SK-N-SH (cell line): ENCODE measurements at regions of chr10 and their contacts with region 1.

Region 1: DNA sequence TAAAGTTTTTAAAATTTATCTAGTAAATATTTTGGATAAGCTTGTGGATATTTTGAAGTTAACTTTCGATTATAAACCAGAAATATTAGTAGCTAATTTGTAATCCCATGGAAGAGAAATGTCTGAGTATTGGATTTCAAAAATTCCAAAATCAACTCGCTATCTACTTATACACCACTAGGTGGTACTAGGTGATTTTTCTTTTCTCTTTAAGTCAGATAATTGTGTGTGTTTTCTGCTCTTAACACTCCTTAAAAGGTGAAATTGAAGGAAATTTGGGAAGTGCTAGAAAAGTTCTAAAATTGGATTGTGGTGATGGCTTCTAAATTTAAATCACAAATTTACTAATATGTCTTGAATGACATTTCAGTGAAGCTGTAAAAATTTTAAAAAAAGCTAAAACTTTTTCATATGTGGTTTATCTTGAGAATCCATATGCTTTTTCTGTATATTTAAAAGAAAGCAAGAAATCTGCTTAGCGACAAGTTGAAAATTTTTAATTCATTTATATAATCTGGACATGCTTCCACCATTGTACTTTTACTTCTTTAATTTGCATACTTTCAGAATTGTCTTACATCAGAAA is 90.2 kb downstream of the IPMK start:
- DNase-seq: peak; percentile 23
- H3K4me3 ChIP-seq: no peak overlapping the region; a peak in 1 of 4 replicates
- H3K27ac ChIP-seq: no peak overlapping the region
- H3K4me1 ChIP-seq: no peaks in the 10 kb centered on the region; a peak in 1 of 4 replicates
- H3K27me3 ChIP-seq: no peaks in the 10 kb centered on the region
- CTCF ChIP-seq: peak; percentile 79
- EP300 ChIP-seq: no peak
- RAD21 ChIP-seq: peak; percentile 84

Region 2: GRCh38 chr10:57905861-57906260 is 271.6 kb before region 1 on chr10:
- CTCF ChIA-PET with region 1: no interaction called
- POLR2A ChIA-PET with region 1: no interaction called
- DNase-seq: no peak
- H3K4me3 ChIP-seq: no peak overlapping the region
- H3K27ac ChIP-seq: no peak overlapping the region
- H3K4me1 ChIP-seq: no peaks in the 10 kb centered on the region
- H3K27me3 ChIP-seq: no peaks in the 10 kb centered on the region
- CTCF ChIP-seq: no peak
- EP300 ChIP-seq: no peak
- RAD21 ChIP-seq: no peak

Region 3: DNA sequence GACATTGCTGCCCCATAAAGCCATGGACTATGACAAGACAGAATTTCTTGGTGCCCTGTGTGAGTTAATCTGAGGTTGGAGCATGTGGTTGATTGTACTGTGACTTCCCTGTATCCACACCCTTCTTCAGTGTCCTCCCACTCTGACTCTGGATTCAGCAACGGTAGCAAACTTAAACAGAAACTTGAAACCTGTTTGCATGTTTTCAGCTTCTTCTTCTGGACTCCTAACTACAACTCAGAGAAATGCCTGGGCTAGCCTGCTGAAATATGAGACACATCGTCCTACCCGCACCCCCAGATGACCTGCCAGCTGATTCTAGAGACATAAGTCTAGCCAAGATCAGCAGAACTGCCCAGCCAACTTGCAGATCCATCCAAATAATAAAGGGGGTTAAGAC is 11.8 kb after region 1 on chr10:
- CTCF ChIA-PET with region 1: interaction called, 19 read pairs
- POLR2A ChIA-PET with region 1: no interaction called
- DNase-seq: no peak
- H3K4me3 ChIP-seq: no peak overlapping the region
- H3K27ac ChIP-seq: no peak overlapping the region
- H3K4me1 ChIP-seq: no peaks in the 10 kb centered on the region
- H3K27me3 ChIP-seq: no peaks in the 10 kb centered on the region
- CTCF ChIP-seq: no peak
- EP300 ChIP-seq: no peak
- RAD21 ChIP-seq: no peak

Region 4: GRCh38 chr10:58268870-58269605 is 91.6 kb after region 1 on chr10 and contains the start of gene CISD1:
- CTCF ChIA-PET with region 1: interaction called, 20 read pairs
- POLR2A ChIA-PET with region 1: interaction called, 4 read pairs
- DNase-seq: peak; percentile 96
- H3K4me3 ChIP-seq: peak within 1 kb of the TSS; percentile 74 to 96
- H3K27ac ChIP-seq: peak within 1 kb of the TSS; percentile 92 to 93
- H3K4me1 ChIP-seq: peaks cover 8 to 16% of the 10 kb centered on the region in 2 experiments; a peak in 3 of 4 replicates
- H3K27me3 ChIP-seq: no peaks in the 10 kb centered on the region
- CTCF ChIP-seq: no peak
- EP300 ChIP-seq: 0 out of 4 replicates have a peak, but pooled peaks of 1 of the 2 experiments have one; percentile 7
- RAD21 ChIP-seq: no peak
- polyA plus RNA-seq, gene CISD1: 34.1 and 40.8 TPM in 2 replicates

Region 5: DNA sequence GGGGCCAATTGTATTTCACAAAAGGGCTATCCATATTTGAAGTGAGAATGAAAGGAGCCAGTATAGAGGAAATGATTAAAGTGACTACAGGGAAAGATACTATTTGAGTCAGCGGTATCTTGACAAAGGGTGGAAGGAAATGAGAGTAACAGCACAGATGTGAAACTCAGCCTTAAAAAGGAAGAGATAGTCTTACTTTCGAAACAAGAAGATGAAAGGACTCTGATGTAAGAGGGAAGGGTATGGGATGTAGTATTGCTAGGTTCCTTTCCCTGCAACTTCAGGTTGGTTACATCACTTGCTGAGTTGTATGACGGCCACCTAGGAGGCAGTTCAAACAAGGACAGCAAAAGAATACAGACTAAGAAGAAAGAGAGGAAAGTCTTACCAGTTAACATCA is 105.2 kb after region 1 on chr10:
- CTCF ChIA-PET with region 1: interaction called, 17 read pairs
- POLR2A ChIA-PET with region 1: no interaction called
- DNase-seq: no peak
- H3K4me3 ChIP-seq: no peak overlapping the region
- H3K27ac ChIP-seq: 0 out of 4 replicates have a peak overlapping the region, but pooled peaks of 1 of the 2 experiments have one; percentile 73
- H3K4me1 ChIP-seq: peaks cover 0 to 20% of the 10 kb centered on the region in 2 experiments; a peak in 2 of 4 replicates
- H3K27me3 ChIP-seq: no peaks in the 10 kb centered on the region
- CTCF ChIP-seq: no peak
- EP300 ChIP-seq: no peak
- RAD21 ChIP-seq: no peak

Region 6: GRCh38 chr10:58299580-58299979 is 122.1 kb after region 1 on chr10:
- CTCF ChIA-PET with region 1: interaction called, 200 read pairs
- POLR2A ChIA-PET with region 1: no interaction called
- DNase-seq: peak; percentile 60
- H3K4me3 ChIP-seq: no peak overlapping the region; a peak in 1 of 4 replicates
- H3K27ac ChIP-seq: no peak overlapping the region
- H3K4me1 ChIP-seq: no peaks in the 10 kb centered on the region
- H3K27me3 ChIP-seq: no peaks in the 10 kb centered on the region
- CTCF ChIP-seq: peak; percentile 86
- EP300 ChIP-seq: no peak
- RAD21 ChIP-seq: peak; percentile 84